ENCODE measurements at regions of chr1 and their contacts with region 1.

Region 1: DNA sequence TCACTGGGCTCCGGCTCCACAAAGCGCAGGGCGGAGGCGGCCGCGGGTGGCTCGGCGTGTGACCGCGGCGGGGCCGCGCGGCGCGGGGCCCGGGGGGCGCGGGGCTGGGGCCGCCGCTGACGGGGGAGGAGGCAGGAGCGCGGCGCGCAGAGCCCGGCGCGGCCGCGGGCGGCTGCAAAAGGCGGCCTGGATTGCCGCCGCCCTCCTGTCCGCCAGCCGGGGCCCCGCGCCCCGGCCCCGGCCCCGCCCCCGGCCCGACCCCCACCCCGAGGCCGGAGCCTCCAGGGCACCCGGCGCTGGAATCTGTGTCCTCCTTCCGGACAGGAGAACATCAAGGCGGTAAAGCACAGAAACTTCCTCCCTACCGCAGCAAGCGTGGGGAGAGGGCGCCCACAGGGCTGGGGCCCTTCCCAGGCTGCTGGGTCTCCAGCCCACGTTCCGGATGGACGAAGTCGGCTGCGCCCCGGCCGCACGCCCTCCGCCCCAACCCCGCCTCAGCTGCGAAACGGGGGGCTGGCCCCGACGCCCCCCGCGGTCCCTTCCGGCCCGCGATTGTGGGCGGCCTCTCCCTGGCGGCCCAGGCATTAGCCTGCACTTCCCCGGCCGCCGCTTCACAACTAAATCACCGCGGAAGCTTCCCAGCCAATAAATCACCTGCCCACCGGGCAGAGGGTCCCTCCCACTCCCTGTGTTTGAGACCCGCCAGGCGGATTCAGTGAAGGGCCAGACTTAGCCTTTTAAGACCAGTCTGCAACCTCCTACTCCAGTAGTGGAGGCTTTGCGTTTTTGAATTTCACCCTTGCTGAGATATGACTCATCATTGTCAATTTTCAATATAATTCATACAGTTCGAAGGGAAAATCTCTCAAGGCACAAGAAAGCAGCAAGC is 106.0 kb downstream of the SLC45A1 start:
- DNase-seq: peak; percentile 71
- ATAC-seq: peak; percentile 47

Region 2: DNA sequence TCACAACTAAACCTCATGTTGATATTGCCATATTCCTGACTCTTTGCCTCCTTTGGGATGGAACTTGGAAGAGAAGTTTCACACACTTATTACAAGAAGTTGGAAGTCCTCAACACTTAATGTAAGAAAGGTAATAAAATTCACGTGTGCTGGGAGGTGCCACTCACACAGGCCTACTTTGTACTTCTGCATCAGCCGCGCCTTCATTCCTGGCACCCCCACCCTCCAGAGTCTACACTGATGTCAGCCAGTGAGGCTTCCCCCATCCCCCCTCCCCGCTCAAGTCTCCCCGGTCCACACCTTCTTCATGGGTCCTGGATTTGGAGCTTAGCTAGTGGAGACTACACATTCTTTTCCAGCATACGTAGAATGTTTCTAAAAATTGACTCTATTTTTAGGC is 130.8 kb before region 1 on chr1:
- intact Hi-C with region 1: no loop called
- DNase-seq: no peak
- ATAC-seq: no peak

Region 3: DNA sequence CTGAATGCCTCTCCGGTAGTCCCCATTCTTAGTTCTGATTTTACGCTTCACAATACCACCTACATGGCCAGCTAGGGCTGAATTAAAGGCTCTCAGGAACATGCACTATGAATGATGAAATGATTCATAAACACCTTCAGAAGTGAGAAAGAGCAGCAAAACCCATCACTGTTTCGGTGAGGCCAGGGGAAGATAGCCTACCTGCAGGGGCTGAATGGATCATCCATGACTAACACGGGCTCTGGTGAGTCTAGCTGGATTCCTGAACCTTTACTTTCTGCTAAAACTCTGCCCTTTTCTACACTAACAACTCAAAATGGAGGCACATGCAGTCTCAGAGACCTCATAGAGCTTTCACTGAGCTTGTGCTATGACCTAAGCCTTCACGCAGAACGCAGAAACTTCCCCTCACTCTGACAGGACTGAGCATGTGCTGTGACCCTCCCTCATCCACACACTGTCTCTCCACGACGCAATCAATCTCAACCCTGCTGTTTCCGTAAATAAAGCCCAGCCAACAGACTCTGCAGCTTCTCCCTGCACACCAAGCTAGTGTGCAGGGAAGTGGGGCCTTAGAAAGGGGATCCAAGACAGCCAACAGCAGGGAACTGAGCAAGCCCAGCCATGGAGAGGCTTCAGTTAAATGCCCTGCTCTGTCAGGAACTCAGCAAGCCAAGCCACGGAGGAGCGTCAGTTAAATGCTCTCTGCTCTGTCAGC is 101.8 kb after region 1 on chr1:
- intact Hi-C with region 1: loop called (anchors 5 kb)
- DNase-seq: peak; percentile 82
- ATAC-seq: peak; percentile 98